ENCODE measurements at regions of chr11 and their contacts with region 1.

Region 1: GRCh38 chr11:45846974-45847910 is at the start of gene CRY2:
- DNase-seq: peak; percentile 93
- H3K4me3 ChIP-seq: peak within 1 kb of the TSS; percentile 95
- CTCF ChIP-seq: no peak

Region 2: DNA sequence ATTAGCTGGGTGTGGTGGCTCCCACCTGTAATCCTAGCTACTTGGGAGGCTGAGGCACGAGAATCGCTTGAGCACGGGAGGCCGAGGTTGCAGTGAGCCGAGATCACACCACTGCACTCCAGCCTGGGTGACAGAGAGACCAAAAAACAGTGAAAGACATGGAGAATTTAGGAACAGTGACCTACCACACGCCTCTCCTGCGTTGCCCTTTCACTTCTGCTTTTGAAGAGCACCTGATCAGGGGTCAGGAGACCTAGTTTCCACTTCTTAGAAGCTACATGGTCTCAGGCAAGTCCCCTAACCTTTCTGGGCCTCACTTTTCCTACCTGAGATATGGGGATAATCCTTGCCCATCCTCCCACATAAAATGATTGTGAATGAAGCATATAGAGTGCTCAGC is 30.1 kb before region 1 on chr11:
- CTCF ChIA-PET with region 1: interaction called, 22 read pairs
- POLR2A ChIA-PET with region 1: no interaction called
- DNase-seq: no peak
- H3K4me3 ChIP-seq: no peak overlapping the region
- CTCF ChIP-seq: no peak

Region 3: GRCh38 chr11:45834298-45834756 is 12.9 kb before region 1 on chr11:
- CTCF ChIA-PET with region 1: interaction called, 118 read pairs
- POLR2A ChIA-PET with region 1: no interaction called
- DNase-seq: no peak
- H3K4me3 ChIP-seq: no peak overlapping the region
- CTCF ChIP-seq: no peak

Region 4: DNA sequence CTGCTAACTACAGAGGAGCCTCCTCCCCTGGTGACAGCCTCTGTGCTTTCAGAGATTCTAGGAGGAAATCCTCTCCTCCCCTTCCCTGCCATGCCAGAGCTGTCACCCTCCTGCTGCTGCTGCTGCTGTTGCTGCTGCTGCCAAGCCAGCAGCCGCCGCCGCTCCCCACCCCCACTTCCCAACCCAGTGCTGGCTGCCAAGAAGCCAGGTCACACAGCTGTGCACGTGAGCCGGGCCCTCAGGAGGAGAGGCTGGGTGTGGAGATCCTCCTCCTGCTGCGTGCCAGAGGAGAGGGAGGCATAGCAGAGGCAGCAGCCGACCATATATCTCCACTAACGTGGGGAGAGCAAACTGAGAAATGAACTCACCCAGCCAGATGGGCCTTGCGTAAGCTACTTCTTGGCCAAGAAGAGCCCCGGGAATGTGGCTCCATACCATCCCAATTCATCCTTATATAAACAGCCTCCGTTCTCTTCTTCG is 12.5 kb after region 1 on chr11:
- CTCF ChIA-PET with region 1: interaction called, 48 read pairs
- POLR2A ChIA-PET with region 1: interaction called, 10 read pairs
- DNase-seq: peak; percentile 99
- H3K4me3 ChIP-seq: no peak overlapping the region
- CTCF ChIP-seq: no peak